A673 (cell line): ENCODE measurements at regions of chr19 and their contacts with region 1.

Region 1: DNA sequence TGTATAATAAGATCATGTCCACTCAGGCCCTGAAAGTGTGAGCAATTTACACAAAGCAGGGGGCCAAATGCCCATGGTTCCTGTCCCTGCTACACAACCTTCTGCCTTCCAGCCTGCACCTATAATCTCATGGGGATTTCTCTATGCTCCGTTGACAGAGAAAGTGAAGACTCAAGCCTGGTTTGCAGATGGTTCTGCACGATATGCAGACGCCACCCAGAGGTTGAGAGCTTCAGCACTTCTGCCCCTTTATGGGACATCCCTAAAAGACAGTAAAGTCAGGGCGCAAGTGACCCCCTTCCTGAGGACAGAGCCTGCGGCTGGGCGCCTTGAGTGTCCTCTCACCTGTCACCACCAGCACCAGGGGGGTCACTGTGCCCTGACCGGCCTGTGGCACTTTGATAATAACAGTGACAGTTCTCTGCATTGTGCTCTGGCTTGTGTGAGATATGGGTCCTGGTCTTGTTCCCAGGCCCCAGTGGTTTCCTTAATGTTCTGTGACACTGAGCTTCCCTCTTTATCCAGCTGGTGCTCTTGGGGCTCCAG is 15.1 kb downstream of the LILRA5 start:
- DNase-seq: no peak
- H3K4me3 ChIP-seq: no peak overlapping the region
- H3K27ac ChIP-seq: no peak overlapping the region
- H3K4me1 ChIP-seq: no peaks in the 10 kb centered on the region
- H3K27me3 ChIP-seq: peaks cover 55% of the 10 kb centered on the region
- CTCF ChIP-seq: peak; percentile 24; the same call in 1 of the 2 replicates

Region 2: GRCh38 chr19:53660584-53660983 is 637.2 kb before region 1 on chr19:
- CTCF ChIA-PET with region 1: interaction called, 10 read pairs
- POLR2A ChIA-PET with region 1: no interaction called
- intact Hi-C with region 1: no loop called
- DNase-seq: no peak
- H3K4me3 ChIP-seq: no peak overlapping the region
- H3K27ac ChIP-seq: no peak overlapping the region
- H3K4me1 ChIP-seq: no peaks in the 10 kb centered on the region
- H3K27me3 ChIP-seq: no peaks in the 10 kb centered on the region
- CTCF ChIP-seq: no peak

Region 3: DNA sequence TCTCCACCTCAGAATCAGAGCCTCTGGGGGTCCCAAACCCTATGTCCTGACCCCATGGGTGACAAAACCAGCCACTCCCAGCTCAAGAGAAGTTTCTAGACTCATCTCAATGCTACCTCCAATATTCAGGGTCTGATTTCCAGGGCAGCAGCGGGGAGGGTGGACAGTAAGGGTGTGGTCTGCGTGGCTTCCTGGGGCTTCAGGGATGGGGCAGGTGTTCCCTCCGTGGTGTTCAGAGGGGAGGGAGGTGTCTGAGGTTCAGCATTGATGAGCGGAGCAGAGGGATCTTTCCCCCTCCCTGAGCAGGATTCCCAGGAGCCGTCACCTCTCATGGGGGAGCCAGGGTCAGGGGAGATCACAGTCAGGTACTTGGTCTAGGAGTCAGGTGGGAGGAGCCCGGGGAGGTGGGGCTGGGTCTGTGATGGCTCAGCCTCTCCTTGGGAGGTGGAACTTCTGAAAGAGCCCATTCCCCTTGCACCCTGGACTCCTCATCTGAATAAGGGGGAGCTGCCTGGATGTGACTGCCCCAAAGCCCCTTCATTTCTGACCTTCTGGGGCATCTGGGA is 278.7 kb after region 1 on chr19:
- CTCF ChIA-PET with region 1: no interaction called
- POLR2A ChIA-PET with region 1: no interaction called
- intact Hi-C with region 1: loop called (anchors 5 kb)
- DNase-seq: no peak
- H3K4me3 ChIP-seq: no peak overlapping the region
- H3K27ac ChIP-seq: no peak overlapping the region
- H3K4me1 ChIP-seq: no peaks in the 10 kb centered on the region
- H3K27me3 ChIP-seq: peaks cover 10% of the 10 kb centered on the region
- CTCF ChIP-seq: no peak